ENCODE measurements at regions of chr2 and their contacts with region 1.

Region 1: GRCh38 chr2:6780765-6781274 is 84.9 kb downstream of the CMPK2 start:
- DNase-seq: peak; percentile 50
- H3K4me3 ChIP-seq: no peak overlapping the region
- H3K27ac ChIP-seq: peak overlapping the region; percentile 77
- H3K4me1 ChIP-seq: peaks cover 10% of the 10 kb centered on the region
- H3K27me3 ChIP-seq: no peaks in the 10 kb centered on the region
- CTCF ChIP-seq: no peak
- POLR2A ChIP-seq: no peak

Region 2: GRCh38 chr2:6750411-6751158 is 30.2 kb before region 1 on chr2:
- CTCF ChIA-PET with region 1: no interaction called
- POLR2A ChIA-PET with region 1: no interaction called
- dilution Hi-C with region 1: no loop called
- intact Hi-C with region 1: loop called (anchors 1 kb)
- DNase-seq: no peak
- H3K4me3 ChIP-seq: no peak overlapping the region
- H3K27ac ChIP-seq: no peak overlapping the region
- H3K4me1 ChIP-seq: no peaks in the 10 kb centered on the region
- H3K27me3 ChIP-seq: no peaks in the 10 kb centered on the region
- CTCF ChIP-seq: no peak
- POLR2A ChIP-seq: no peak

Region 3: GRCh38 chr2:6865346-6866274 is 84.8 kb after region 1 on chr2 and contains the start of gene CMPK2:
- CTCF ChIA-PET with region 1: no interaction called
- POLR2A ChIA-PET with region 1: no interaction called
- dilution Hi-C with region 1: no loop called
- intact Hi-C with region 1: no loop called
- DNase-seq: peak; percentile 13
- H3K4me3 ChIP-seq: peak within 1 kb of the TSS; percentile 35 to 55 (median 44)
- H3K27ac ChIP-seq: no peak within 1 kb of the TSS
- H3K4me1 ChIP-seq: peaks cover 4% of the 10 kb centered on the region
- H3K27me3 ChIP-seq: peaks cover 6 to 7% of the 10 kb centered on the region in 2 experiments
- CTCF ChIP-seq: peak in 1 of 2 donors; percentile 12
- POLR2A ChIP-seq: no peak
- total RNA-seq, gene CMPK2: 0.69 and 0.81 TPM in 2 replicates

Measured in endothelial cell of umbilical vein (primary cell).